PC-9 (cell line): ENCODE measurements at regions of chrX and their contacts with region 1.

Region 1: GRCh38 chrX:119516157-119516702 is 48.0 kb downstream of the SLC25A5 start:
- DNase-seq: peak; percentile 36 to 57
- H3K4me3 ChIP-seq: no peak overlapping the region
- H3K27ac ChIP-seq: no peak overlapping the region
- H3K4me1 ChIP-seq: peaks cover 5% of the 10 kb centered on the region; the same call in 1 of the 2 replicates
- H3K27me3 ChIP-seq: no peaks in the 10 kb centered on the region
- CTCF ChIP-seq: peak; percentile 95

Region 2: GRCh38 chrX:119118780-119119395 is 397.3 kb before region 1 on chrX:
- CTCF ChIA-PET with region 1: interaction called, 3 read pairs
- POLR2A ChIA-PET with region 1: no interaction called
- intact Hi-C with region 1: loop called (anchors 1 kb)
- DNase-seq: peak; percentile 50 to 57
- H3K4me3 ChIP-seq: no peak overlapping the region
- H3K27ac ChIP-seq: no peak overlapping the region
- H3K4me1 ChIP-seq: no peaks in the 10 kb centered on the region
- H3K27me3 ChIP-seq: peaks cover 22% of the 10 kb centered on the region
- CTCF ChIP-seq: peak; percentile 97

Region 3: DNA sequence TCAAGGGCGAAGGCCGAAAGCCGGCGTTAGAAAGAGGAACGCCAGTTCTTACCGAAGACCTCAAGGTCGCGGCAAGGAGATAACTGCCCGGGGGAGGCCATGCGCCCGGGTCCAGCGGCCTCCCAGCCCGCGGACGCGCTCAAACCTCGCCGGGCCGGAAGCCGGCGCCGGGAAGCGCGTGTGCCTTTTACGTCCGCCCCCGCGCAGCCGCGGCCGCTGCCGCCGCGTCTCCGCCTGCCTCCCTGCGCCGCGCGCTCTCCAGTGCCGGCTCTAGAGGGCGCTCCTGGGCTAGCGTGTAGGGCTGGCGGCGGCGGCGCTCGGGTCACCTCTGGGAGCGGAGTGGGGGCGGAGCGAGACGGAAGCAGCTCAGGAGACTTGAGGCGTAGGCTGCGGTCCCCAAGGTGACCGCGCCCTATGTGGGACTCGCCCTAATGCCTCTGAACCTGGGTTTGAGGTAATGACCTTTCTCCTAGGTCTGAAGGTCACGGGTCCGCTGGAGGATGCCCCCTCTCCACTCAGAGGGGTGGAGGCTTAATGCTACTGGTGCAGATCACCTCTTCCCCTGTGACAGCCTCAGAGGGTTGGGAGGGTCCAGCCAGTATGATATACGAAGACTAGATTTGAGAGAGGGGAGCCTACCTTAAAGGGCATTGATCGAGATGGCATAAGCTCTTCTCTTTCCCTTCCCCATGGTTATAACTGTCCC is 47.1 kb before region 1 on chrX:
- CTCF ChIA-PET with region 1: interaction called, 13 read pairs
- POLR2A ChIA-PET with region 1: no interaction called
- intact Hi-C with region 1: loop called (anchors 5 kb)
- DNase-seq: peak; percentile 73 to 94
- H3K4me3 ChIP-seq: peak overlapping the region; percentile 92
- H3K27ac ChIP-seq: peak overlapping the region; percentile 78
- H3K4me1 ChIP-seq: peaks cover 5% of the 10 kb centered on the region
- H3K27me3 ChIP-seq: no peaks in the 10 kb centered on the region
- CTCF ChIP-seq: peak; percentile 80

Region 4: GRCh38 chrX:119488749-119489148 is 27.5 kb before region 1 on chrX:
- CTCF ChIA-PET with region 1: interaction called, 12 read pairs
- POLR2A ChIA-PET with region 1: no interaction called
- intact Hi-C with region 1: loop called (anchors 1 kb)
- DNase-seq: peak; percentile 41 to 58
- H3K4me3 ChIP-seq: no peak overlapping the region
- H3K27ac ChIP-seq: no peak overlapping the region
- H3K4me1 ChIP-seq: no peaks in the 10 kb centered on the region
- H3K27me3 ChIP-seq: no peaks in the 10 kb centered on the region
- CTCF ChIP-seq: peak; percentile 86

Region 5: GRCh38 chrX:119574394-119575266 is 58.4 kb after region 1 on chrX and contains the start of gene UBE2A:
- CTCF ChIA-PET with region 1: interaction called, 5 read pairs
- POLR2A ChIA-PET with region 1: no interaction called
- intact Hi-C with region 1: loop called (anchors 1 kb)
- DNase-seq: peak; percentile 86 to 93
- H3K4me3 ChIP-seq: peak within 1 kb of the TSS; percentile 83
- H3K27ac ChIP-seq: peak within 1 kb of the TSS; percentile 83
- H3K4me1 ChIP-seq: peaks cover 27% of the 10 kb centered on the region
- H3K27me3 ChIP-seq: no peaks in the 10 kb centered on the region
- CTCF ChIP-seq: peak; percentile 61; the same call in 1 of the 2 replicates
- total RNA-seq, gene UBE2A: 103 and 119 TPM in 2 replicates

Region 6: GRCh38 chrX:119778829-119779228 is 262.6 kb after region 1 on chrX:
- CTCF ChIA-PET with region 1: no interaction called
- POLR2A ChIA-PET with region 1: interaction called, 3 read pairs
- intact Hi-C with region 1: loop called (anchors 1 kb)
- DNase-seq: no peak
- H3K4me3 ChIP-seq: no peak overlapping the region
- H3K27ac ChIP-seq: no peak overlapping the region
- H3K4me1 ChIP-seq: no peaks in the 10 kb centered on the region
- H3K27me3 ChIP-seq: no peaks in the 10 kb centered on the region
- CTCF ChIP-seq: no peak

Region 7: DNA sequence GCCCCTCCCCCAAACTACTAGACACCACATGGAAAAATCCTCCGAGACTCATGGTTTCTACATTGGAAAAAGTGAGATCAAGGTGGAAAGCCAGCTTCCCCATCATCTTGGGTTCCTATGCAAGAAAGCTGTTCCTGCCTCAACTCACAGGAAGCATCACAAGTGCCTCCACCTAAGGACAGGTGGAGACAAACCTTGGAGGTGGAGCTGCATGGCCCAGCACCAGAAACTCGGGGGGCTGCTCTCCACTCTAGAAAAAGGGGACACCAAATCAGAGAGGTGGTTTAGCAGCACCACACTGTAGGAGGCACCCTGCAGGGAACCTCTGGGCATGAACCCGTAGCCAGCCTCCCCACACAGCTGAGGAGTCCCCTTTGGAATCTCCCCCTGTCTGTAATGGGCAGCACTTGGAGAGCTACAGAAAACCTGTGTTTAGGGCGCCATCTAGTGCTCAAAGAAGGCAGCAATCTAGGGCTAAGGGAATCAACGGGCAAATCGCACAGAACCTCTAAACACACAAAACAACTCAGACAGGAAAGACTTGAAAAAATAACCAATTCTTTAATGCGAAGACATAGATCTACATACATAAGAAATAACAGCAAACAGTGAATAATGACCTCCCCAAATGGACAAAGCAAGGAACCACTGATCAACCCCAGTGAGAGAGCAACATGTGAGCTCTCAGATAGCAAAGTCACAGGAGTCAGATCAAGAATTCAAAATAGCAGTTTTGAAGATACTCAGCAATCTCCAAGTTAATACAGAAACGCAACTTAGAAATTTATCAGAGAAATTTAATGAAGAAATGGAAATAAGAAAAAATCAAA is 697.4 kb after region 1 on chrX:
- CTCF ChIA-PET with region 1: no interaction called
- POLR2A ChIA-PET with region 1: no interaction called
- intact Hi-C with region 1: loop called (anchors 10 kb)
- DNase-seq: peak; percentile 38 to 63
- H3K4me3 ChIP-seq: no peak overlapping the region
- H3K27ac ChIP-seq: no peak overlapping the region
- H3K4me1 ChIP-seq: no peaks in the 10 kb centered on the region
- H3K27me3 ChIP-seq: no peaks in the 10 kb centered on the region
- CTCF ChIP-seq: peak; percentile 89